CD4-positive, alpha-beta T cell (primary cell): ENCODE measurements at regions of chr1 and their contacts with region 1.

Region 1: GRCh38 chr1:67685067-67685557 is at the start of gene GADD45A:
- DNase-seq: peak; percentile 84 to 98 (median 88)
- ATAC-seq: peak; percentile 87
- H3K4me3 ChIP-seq: peak within 1 kb of the TSS; percentile 91
- H3K4me3 Mint-ChIP-seq: peak within 1 kb of the TSS; percentile 98
- H3K27ac ChIP-seq: peak within 1 kb of the TSS; percentile 21 to 31
- H3K27ac Mint-ChIP-seq: peak within 1 kb of the TSS; percentile 89
- H3K4me1 ChIP-seq: peaks cover 17% of the 10 kb centered on the region
- H3K4me1 Mint-ChIP-seq: peaks cover 28% of the 10 kb centered on the region
- H3K27me3 ChIP-seq: no peaks in the 10 kb centered on the region
- H3K27me3 Mint-ChIP-seq: no peaks in the 10 kb centered on the region
- CTCF ChIP-seq: no peak
- total RNA-seq, gene GADD45A: 136 to 140 TPM

Region 2: GRCh38 chr1:66339944-66340343 is 1345.2 kb before region 1 on chr1:
- CTCF ChIA-PET with region 1: no interaction called
- POLR2A ChIA-PET with region 1: no interaction called
- intact Hi-C with region 1: loop called in 1 of 2 experiments (anchors 10 kb)
- DNase-seq: peak in 3 of 14 experiments; percentile 14 to 54 (median 34)
- ATAC-seq: no peak
- H3K4me3 ChIP-seq: peak overlapping the region; percentile 12
- H3K4me3 Mint-ChIP-seq: peak overlapping the region; percentile 67
- H3K27ac ChIP-seq: no peak overlapping the region
- H3K27ac Mint-ChIP-seq: peak overlapping the region; percentile 72
- H3K4me1 ChIP-seq: peaks cover 45% of the 10 kb centered on the region
- H3K4me1 Mint-ChIP-seq: peaks cover 85% of the 10 kb centered on the region
- H3K27me3 ChIP-seq: no peaks in the 10 kb centered on the region
- H3K27me3 Mint-ChIP-seq: no peaks in the 10 kb centered on the region
- CTCF ChIP-seq: no peak

Region 3: GRCh38 chr1:66929999-66930822 is 754.9 kb before region 1 on chr1:
- CTCF ChIA-PET with region 1: no interaction called
- POLR2A ChIA-PET with region 1: interaction called, 9 read pairs
- intact Hi-C with region 1: loop called in 1 of 2 experiments (anchors 5 kb)
- DNase-seq: peak; percentile 88 to 98 (median 94)
- ATAC-seq: peak; percentile 66
- H3K4me3 ChIP-seq: peak overlapping the region; percentile 93
- H3K4me3 Mint-ChIP-seq: peak overlapping the region; percentile 91
- H3K27ac ChIP-seq: peak overlapping the region; percentile 87 to 88
- H3K27ac Mint-ChIP-seq: peak overlapping the region; percentile 84
- H3K4me1 ChIP-seq: peaks cover 18% of the 10 kb centered on the region
- H3K4me1 Mint-ChIP-seq: peaks cover 74% of the 10 kb centered on the region
- H3K27me3 ChIP-seq: no peaks in the 10 kb centered on the region
- H3K27me3 Mint-ChIP-seq: no peaks in the 10 kb centered on the region
- CTCF ChIP-seq: peak; percentile 52

Region 4: GRCh38 chr1:67430352-67431155 is 254.6 kb before region 1 on chr1 and contains the start of gene SERBP1:
- CTCF ChIA-PET with region 1: no interaction called
- POLR2A ChIA-PET with region 1: interaction called, 26 read pairs
- intact Hi-C with region 1: loop called (anchors 2 to 5 kb)
- DNase-seq: peak; percentile 89 to 99 (median 94)
- ATAC-seq: peak; percentile 86
- H3K4me3 ChIP-seq: peak within 1 kb of the TSS; percentile 97
- H3K4me3 Mint-ChIP-seq: peak within 1 kb of the TSS; percentile 97
- H3K27ac ChIP-seq: peak within 1 kb of the TSS; percentile 97 to 98
- H3K27ac Mint-ChIP-seq: peak within 1 kb of the TSS; percentile 94
- H3K4me1 ChIP-seq: peaks cover 11% of the 10 kb centered on the region
- H3K4me1 Mint-ChIP-seq: peaks cover 59% of the 10 kb centered on the region
- H3K27me3 ChIP-seq: no peaks in the 10 kb centered on the region
- H3K27me3 Mint-ChIP-seq: no peaks in the 10 kb centered on the region
- CTCF ChIP-seq: no peak
- total RNA-seq, gene SERBP1: 128 to 135 TPM

Region 5: GRCh38 chr1:67674260-67675011 is 10.7 kb before region 1 on chr1:
- CTCF ChIA-PET with region 1: interaction called, 5 read pairs
- POLR2A ChIA-PET with region 1: interaction called, 74 read pairs
- intact Hi-C with region 1: loop called (anchors 1 to 2 kb)
- DNase-seq: peak; percentile 3 to 81 (median 34)
- ATAC-seq: peak; percentile 80
- H3K4me3 ChIP-seq: no peak overlapping the region
- H3K4me3 Mint-ChIP-seq: peak overlapping the region; percentile 49
- H3K27ac ChIP-seq: no peak overlapping the region
- H3K27ac Mint-ChIP-seq: peak overlapping the region; percentile 62
- H3K4me1 ChIP-seq: peaks cover 11% of the 10 kb centered on the region
- H3K4me1 Mint-ChIP-seq: peaks cover 23% of the 10 kb centered on the region
- H3K27me3 ChIP-seq: peaks cover 0 to 3% of the 10 kb centered on the region in 2 experiments
- H3K27me3 Mint-ChIP-seq: peaks cover 5% of the 10 kb centered on the region
- CTCF ChIP-seq: no peak

Region 6: GRCh38 chr1:67735806-67736627 is 50.9 kb after region 1 on chr1:
- CTCF ChIA-PET with region 1: no interaction called
- POLR2A ChIA-PET with region 1: interaction called, 24 read pairs
- intact Hi-C with region 1: no loop called
- DNase-seq: peak in 12 of 14 experiments; percentile 13 to 57 (median 32)
- ATAC-seq: peak; percentile 92
- H3K4me3 ChIP-seq: peak overlapping the region; percentile 27
- H3K4me3 Mint-ChIP-seq: peak overlapping the region; percentile 65
- H3K27ac ChIP-seq: no peak overlapping the region
- H3K27ac Mint-ChIP-seq: peak overlapping the region; percentile 86
- H3K4me1 ChIP-seq: peaks cover 19% of the 10 kb centered on the region
- H3K4me1 Mint-ChIP-seq: peaks cover 27% of the 10 kb centered on the region
- H3K27me3 ChIP-seq: no peaks in the 10 kb centered on the region
- H3K27me3 Mint-ChIP-seq: no peaks in the 10 kb centered on the region
- CTCF ChIP-seq: no peak

Region 7: DNA sequence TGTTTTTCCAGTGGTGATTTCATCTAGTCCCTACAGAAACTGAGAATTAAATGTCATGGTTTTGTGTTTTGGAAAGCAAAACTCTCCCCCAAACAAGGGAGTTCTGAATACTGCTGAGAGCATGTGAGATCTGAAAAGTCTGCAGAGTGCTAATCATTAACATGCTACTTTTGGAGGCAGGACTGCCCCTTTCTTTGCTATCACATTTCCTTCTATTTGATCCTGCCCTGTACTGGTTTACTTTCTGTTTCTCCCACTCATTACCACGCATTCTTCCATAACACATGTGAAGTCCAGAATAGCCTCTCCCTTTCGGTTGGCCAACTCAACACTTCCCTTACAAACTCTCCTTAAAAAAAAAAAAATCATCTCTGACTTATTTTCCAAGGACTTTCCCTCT is 63.5 kb after region 1 on chr1:
- CTCF ChIA-PET with region 1: no interaction called
- POLR2A ChIA-PET with region 1: no interaction called
- intact Hi-C with region 1: no loop called
- DNase-seq: no peak
- ATAC-seq: no peak
- H3K4me3 ChIP-seq: no peak overlapping the region
- H3K4me3 Mint-ChIP-seq: no peak overlapping the region
- H3K27ac ChIP-seq: no peak overlapping the region
- H3K27ac Mint-ChIP-seq: no peak overlapping the region
- H3K4me1 ChIP-seq: no peaks in the 10 kb centered on the region
- H3K4me1 Mint-ChIP-seq: no peaks in the 10 kb centered on the region
- H3K27me3 ChIP-seq: no peaks in the 10 kb centered on the region
- H3K27me3 Mint-ChIP-seq: peaks cover 28% of the 10 kb centered on the region
- CTCF ChIP-seq: no peak

Region 8: DNA sequence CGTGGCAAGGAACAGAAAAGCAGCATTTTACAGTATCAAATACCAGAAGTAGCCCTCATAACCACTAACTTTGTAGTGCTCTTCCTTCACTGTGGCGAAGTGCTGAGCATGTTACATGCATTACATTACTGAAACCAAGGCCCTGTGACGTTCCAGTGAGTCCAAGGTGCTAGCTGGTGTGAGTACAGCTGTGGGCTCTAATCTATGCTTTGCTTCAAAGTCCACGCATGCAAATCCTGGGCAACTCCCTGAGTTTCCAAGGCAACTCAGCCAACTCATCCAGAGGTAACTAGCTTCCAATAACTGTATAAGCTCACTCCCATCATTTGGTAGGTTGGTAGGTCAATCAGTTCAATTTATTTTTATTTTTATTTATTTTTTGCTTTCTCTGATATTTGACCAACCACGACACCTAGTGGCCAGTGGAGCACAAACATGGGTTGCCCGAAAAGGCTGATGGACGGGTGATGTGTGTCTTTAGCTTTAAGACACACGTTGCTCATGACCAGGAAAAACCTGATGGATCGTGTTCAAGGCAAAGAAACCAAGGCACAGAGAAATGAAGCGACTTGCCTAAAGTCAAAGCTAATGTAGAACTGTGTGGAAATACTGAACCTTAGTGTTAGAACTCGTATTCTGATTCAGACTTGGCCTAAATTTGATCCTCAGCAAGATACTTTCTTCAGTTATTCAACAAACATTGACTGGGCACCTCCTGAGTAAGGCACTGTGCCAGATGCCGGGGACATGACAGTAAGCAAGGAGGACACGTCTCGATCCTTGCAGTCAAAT is 75.1 kb after region 1 on chr1:
- CTCF ChIA-PET with region 1: no interaction called
- POLR2A ChIA-PET with region 1: interaction called, 11 read pairs
- intact Hi-C with region 1: loop called (anchors 2 to 5 kb)
- DNase-seq: peak; percentile 40 to 78 (median 47)
- ATAC-seq: peak; percentile 59
- H3K4me3 ChIP-seq: no peak overlapping the region
- H3K4me3 Mint-ChIP-seq: no peak overlapping the region
- H3K27ac ChIP-seq: no peak overlapping the region
- H3K27ac Mint-ChIP-seq: no peak overlapping the region
- H3K4me1 ChIP-seq: no peaks in the 10 kb centered on the region
- H3K4me1 Mint-ChIP-seq: no peaks in the 10 kb centered on the region
- H3K27me3 ChIP-seq: peaks cover 9 to 10% of the 10 kb centered on the region in 2 experiments
- H3K27me3 Mint-ChIP-seq: peaks cover 29% of the 10 kb centered on the region
- CTCF ChIP-seq: peak; percentile 96